A549 (cell line): ENCODE measurements at regions of chr16 and their contacts with region 1.

Region 1: DNA sequence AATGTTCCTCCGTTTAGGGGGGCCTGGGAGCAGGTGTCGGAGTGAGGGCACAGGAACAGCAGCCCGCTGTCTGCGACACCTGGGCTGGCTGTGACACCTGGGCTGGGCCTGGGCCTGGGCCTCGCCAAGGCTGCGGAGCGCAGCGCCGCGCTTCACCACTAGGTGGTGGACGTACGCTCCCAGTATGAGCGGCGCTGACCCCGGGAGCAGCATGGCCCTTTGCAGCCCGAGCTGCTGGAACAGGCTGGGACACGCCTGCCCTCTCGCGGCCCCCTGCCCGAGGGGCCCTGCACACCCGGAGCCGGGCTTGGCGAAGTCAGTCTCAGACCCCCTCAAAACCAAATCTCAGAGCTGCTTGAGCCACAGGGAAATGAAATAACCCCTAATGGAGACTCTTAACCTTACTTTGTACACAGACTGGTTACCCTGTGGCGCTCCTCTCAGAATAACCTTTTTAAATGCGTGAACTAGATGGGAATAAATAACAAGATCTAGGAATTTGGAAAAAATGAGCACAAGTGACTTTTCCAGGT is 38.6 kb upstream of the FA2H start:
- DNase-seq: peak; percentile 87 to 91
- ATAC-seq: peak; percentile 99 to 100
- H3K4me3 ChIP-seq: no peak overlapping the region
- H3K27ac ChIP-seq: peak overlapping the region; percentile 39 to 74; a peak in 5 of 6 replicates
- H3K4me1 ChIP-seq: no peaks in the 10 kb centered on the region
- CTCF ChIP-seq: peak; percentile 96
- EP300 ChIP-seq: no peak
- POLR2A ChIP-seq: no peak
- RAD21 ChIP-seq: peak; percentile 88 to 96

Region 2: DNA sequence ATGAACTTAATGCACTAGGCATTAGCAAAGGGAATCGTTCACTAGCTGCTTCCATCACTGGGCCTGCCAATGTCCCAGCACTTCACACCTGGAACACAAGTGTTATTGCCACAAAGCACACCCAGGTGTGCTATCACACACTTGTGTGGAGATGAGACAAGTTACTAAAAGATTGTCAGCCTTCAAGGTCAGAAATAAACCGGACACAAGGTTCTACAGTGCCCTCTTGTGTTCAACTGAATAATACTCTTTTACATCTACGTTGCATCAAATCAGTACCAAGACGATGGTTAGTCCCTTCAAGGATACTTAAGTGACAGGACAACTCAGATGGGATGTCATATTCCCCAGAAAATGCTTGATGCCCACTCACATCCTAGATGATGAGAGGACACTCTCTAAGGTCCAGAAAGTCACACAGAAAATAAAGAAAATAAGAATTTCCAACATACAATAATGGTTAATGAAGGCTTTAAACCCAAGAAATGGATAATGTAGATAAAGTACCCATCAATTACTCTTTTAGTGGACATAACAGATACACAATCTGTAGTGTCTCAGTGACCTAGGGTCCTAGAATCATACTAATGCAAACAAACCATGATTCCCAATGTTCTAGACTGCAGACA is 189.8 kb before region 1 on chr16:
- CTCF ChIA-PET with region 1: no interaction called
- POLR2A ChIA-PET with region 1: no interaction called
- DNase-seq: peak; percentile 57 to 68
- ATAC-seq: peak; percentile 69 to 75; a peak in 5 of 6 replicates
- H3K4me3 ChIP-seq: no peak overlapping the region
- H3K27ac ChIP-seq: no peak overlapping the region
- H3K4me1 ChIP-seq: no peaks in the 10 kb centered on the region
- CTCF ChIP-seq: peak; percentile 79
- EP300 ChIP-seq: no peak
- POLR2A ChIP-seq: no peak
- RAD21 ChIP-seq: peak; percentile 61 to 72

Region 3: DNA sequence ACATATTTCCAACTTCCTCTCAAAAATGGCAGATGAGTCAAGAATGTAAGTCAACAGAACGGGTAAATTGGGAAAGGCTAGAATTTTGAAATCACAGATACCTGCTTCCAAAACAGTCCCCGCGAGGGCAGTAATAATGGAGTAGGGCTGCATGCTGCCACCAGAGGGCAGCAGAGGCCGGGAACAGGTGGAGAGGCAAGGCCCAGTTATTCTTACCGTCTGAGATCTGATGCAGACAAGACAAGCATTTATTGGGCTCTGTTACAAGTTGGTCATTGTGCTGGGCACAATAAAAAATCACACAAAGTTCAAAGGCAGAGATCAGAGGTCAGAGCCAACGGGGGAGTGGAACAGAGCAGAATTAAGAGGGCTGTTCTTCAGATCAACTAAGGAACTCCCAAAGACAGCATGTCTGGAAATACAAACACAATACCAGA is 103.7 kb before region 1 on chr16:
- CTCF ChIA-PET with region 1: interaction called, 102 read pairs
- POLR2A ChIA-PET with region 1: no interaction called
- DNase-seq: peak; percentile 81 to 85
- ATAC-seq: peak; percentile 98
- H3K4me3 ChIP-seq: no peak overlapping the region
- H3K27ac ChIP-seq: peak overlapping the region; percentile 22 to 53; a peak in 4 of 6 replicates
- H3K4me1 ChIP-seq: peaks cover 7% of the 10 kb centered on the region; the same call in 2 of the 3 replicates
- CTCF ChIP-seq: peak; percentile 99
- EP300 ChIP-seq: no peak
- POLR2A ChIP-seq: no peak
- RAD21 ChIP-seq: peak; percentile 99

Region 4: DNA sequence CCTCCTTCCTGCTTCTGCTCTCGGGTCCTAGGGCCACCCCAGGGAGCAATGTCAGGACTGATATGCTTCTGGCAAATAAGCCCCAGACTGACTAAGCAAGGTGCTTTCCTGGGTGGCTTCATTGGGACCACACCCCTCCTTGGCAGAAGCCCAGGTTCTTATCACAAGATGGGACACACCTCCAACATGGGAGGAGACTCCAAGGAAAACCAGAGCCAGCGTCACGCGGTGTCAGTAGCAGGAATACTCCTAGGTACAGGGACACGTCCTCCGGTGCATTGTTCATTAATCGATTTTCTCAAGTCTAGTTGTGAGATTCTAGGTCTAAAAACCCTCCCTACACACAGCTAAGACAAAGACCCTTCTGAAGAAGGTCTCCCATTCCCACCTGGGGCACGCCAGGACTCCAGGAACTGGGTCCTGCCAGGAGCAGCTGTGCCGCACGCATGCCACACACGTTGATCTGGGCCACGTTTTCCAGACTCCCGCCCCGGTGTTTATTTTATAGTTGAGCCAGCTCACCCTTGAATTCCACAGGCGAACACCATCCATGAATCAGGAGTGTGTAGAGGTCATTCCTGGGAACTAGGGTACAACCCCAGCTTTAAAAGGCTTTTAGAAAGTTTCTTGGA is 69.4 kb before region 1 on chr16:
- CTCF ChIA-PET with region 1: interaction called, 14 read pairs
- POLR2A ChIA-PET with region 1: no interaction called
- DNase-seq: peak; percentile 98 to 99
- ATAC-seq: peak; percentile 84 to 86
- H3K4me3 ChIP-seq: peak overlapping the region; percentile 23; the same call in 1 of the 3 replicates
- H3K27ac ChIP-seq: peak overlapping the region; percentile 91
- H3K4me1 ChIP-seq: peaks cover 66% of the 10 kb centered on the region
- CTCF ChIP-seq: no peak
- EP300 ChIP-seq: peak; percentile 37 to 63; a peak in 2 of 5 replicates
- POLR2A ChIP-seq: peak; percentile 6; the same call in 1 of the 2 replicates
- RAD21 ChIP-seq: 0 out of 5 replicates have a peak, but pooled peaks of 1 of the 2 experiments have one; percentile 15

Region 5: GRCh38 chr16:74793571-74793970 is 19.6 kb before region 1 on chr16:
- CTCF ChIA-PET with region 1: interaction called, 16 read pairs
- POLR2A ChIA-PET with region 1: no interaction called
- DNase-seq: no peak
- ATAC-seq: peak in 1 of 2 experiments; percentile 13; a peak in 2 of 6 replicates
- H3K4me3 ChIP-seq: no peak overlapping the region
- H3K27ac ChIP-seq: no peak overlapping the region
- H3K4me1 ChIP-seq: no peaks in the 10 kb centered on the region
- CTCF ChIP-seq: no peak
- EP300 ChIP-seq: no peak
- POLR2A ChIP-seq: no peak
- RAD21 ChIP-seq: no peak

Region 6: GRCh38 chr16:74837056-74837455 is 23.9 kb after region 1 on chr16:
- CTCF ChIA-PET with region 1: interaction called, 19 read pairs
- POLR2A ChIA-PET with region 1: no interaction called
- DNase-seq: no peak
- ATAC-seq: no peak
- H3K4me3 ChIP-seq: no peak overlapping the region
- H3K27ac ChIP-seq: no peak overlapping the region
- H3K4me1 ChIP-seq: peaks cover 7% of the 10 kb centered on the region; the same call in 2 of the 3 replicates
- CTCF ChIP-seq: no peak
- EP300 ChIP-seq: no peak
- POLR2A ChIP-seq: no peak
- RAD21 ChIP-seq: no peak